Gastrocnemius medialis (tissue), 4 donors: ENCODE measurements at regions of chr2 and their contacts with region 1.

Region 1: GRCh38 chr2:44167940-44168680 is 565 bp upstream of the PPM1B start:
- DNase-seq: peak; percentile 100
- ATAC-seq: peak; percentile 72 to 76
- H3K4me3 ChIP-seq: peak overlapping the region; percentile 54 to 65 (median 60)
- H3K27ac ChIP-seq: peak overlapping the region; percentile 89 to 96 (median 92)
- H3K4me1 ChIP-seq: peaks cover 19 to 27% of the 10 kb centered on the region in 2 donors
- H3K27me3 ChIP-seq: no peaks in the 10 kb centered on the region
- CTCF ChIP-seq: no peak
- POLR2A ChIP-seq: peak; percentile 76 to 81

Region 2: GRCh38 chr2:43995733-43996533 is 172.2 kb before region 1 on chr2 and contains the start of gene LRPPRC:
- in situ Hi-C with region 1: no loop called
- intact Hi-C with region 1: loop called (anchors 5 kb)
- DNase-seq: peak; percentile 95
- ATAC-seq: peak; percentile 99
- H3K4me3 ChIP-seq: peak within 1 kb of the TSS; percentile 78 to 99 (median 96)
- H3K27ac ChIP-seq: peak within 1 kb of the TSS; percentile 74 to 97 (median 92)
- H3K4me1 ChIP-seq: peaks cover 22 to 35% of the 10 kb centered on the region in 2 donors
- H3K27me3 ChIP-seq: no peaks in the 10 kb centered on the region
- CTCF ChIP-seq: peak in 1 of 5 experiments; percentile 22
- POLR2A ChIP-seq: peak; percentile 77 to 94
- total RNA-seq, gene LRPPRC: 75.9 to 95.3 (median 81.5) TPM

Region 3: DNA sequence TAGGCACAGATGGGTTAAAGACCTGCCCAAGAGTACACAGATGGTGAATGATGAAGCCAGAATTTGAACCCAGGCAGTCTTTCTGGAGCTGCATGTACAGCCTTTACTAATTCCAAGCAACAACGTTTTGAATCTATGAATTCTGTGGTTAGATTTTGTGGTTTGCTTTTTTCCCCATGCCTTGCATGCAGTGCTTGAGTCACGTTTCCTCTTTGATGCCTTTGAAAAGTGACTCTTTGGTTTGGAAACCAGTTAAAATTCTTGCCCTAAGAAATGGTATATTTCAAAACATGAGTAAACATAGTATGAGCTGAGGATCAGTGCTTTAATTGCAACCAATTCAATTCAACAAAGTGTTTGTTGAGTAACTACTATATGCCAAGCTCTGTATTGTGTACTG is 47.7 kb before region 1 on chr2:
- in situ Hi-C with region 1: no loop called
- intact Hi-C with region 1: loop called (anchors 1 kb)
- DNase-seq: no peak
- ATAC-seq: no peak
- H3K4me3 ChIP-seq: no peak overlapping the region
- H3K27ac ChIP-seq: no peak overlapping the region
- H3K4me1 ChIP-seq: peaks cover 0 to 2% of the 10 kb centered on the region in 2 donors
- H3K27me3 ChIP-seq: no peaks in the 10 kb centered on the region
- CTCF ChIP-seq: no peak
- POLR2A ChIP-seq: no peak

Region 4: GRCh38 chr2:44130441-44130840 is 37.7 kb before region 1 on chr2:
- in situ Hi-C with region 1: no loop called
- intact Hi-C with region 1: loop called (anchors 1 kb)
- DNase-seq: no peak
- ATAC-seq: peak; percentile 75 to 76
- H3K4me3 ChIP-seq: peak overlapping the region in 1 of 4 donors; percentile 14
- H3K27ac ChIP-seq: peak overlapping the region; percentile 80 to 89 (median 86)
- H3K4me1 ChIP-seq: peaks cover 29 to 38% of the 10 kb centered on the region in 2 donors
- H3K27me3 ChIP-seq: no peaks in the 10 kb centered on the region
- CTCF ChIP-seq: no peak
- POLR2A ChIP-seq: peak in 1 of 2 donors; percentile 17

Region 5: DNA sequence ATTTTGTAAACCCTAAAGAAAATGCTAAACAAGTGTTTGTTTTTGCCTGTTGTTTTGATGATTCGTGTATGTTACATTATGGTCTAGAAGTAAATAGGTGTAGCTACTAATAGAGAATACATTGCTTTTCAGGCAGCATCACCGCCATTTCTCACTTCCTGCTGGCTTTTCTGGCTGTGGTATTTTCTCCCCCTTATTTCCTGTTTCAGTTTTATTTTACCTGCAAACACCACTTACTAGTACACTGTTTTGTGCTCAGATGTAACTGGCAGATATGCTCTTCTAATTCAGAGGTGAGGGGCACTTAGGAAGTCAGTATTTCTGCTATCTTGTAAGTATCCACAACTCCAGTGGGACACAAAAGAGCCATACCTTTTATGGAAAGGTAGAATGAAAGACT is 69.1 kb after region 1 on chr2:
- in situ Hi-C with region 1: no loop called
- intact Hi-C with region 1: loop called (anchors 5 kb)
- DNase-seq: no peak
- ATAC-seq: no peak
- H3K4me3 ChIP-seq: no peak overlapping the region
- H3K27ac ChIP-seq: no peak overlapping the region
- H3K4me1 ChIP-seq: peaks cover 0 to 2% of the 10 kb centered on the region in 2 donors
- H3K27me3 ChIP-seq: no peaks in the 10 kb centered on the region
- CTCF ChIP-seq: no peak
- POLR2A ChIP-seq: no peak

Region 6: DNA sequence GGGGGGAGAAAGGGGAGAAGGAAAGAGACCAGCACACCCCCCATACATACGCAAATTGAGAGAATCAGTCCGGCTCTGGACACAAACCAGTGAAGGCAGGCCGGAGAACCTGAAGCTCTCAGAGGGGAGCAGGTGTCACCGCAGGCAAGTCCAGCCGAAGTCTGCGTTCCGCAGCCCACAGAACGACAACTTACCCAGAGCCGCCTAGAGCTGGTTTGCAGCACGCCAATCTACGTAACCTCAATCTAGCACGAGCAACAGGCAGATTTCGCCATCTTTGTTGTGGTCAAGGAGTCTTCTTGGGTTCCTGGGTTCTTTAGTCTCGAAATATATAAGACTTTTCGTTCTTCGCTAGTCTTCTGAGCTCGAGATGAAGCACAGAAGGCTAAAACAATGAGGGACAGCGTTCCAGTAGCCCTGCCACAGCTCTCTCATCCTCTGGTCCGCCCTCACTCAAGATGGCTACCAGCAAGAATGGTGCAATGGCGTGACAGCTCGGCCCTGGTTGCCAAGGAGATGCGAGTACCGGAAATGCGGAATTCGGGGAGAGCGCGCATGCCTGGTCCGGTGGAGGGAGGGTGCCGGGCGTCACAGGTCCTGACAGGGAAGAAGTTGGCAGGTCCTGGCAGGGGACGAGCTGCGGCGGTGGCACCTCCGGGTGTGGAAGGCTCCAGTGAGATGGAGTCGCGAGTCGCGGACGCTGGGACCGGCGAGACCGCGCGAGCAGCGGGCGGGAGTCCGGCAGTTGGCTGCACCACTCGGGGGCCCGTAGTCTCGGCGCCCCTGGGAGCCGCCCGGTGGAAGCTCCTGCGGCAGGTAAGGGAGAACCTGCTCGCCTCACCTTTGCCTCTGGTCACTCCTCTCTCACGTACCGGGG is 193.5 kb after region 1 on chr2 and contains the starts of genes CAMKMT and PREPL:
- in situ Hi-C with region 1: no loop called
- intact Hi-C with region 1: loop called (anchors 5 kb)
- DNase-seq: peak; percentile 98 to 99
- ATAC-seq: peak; percentile 94 to 95
- H3K4me3 ChIP-seq: peak within 1 kb of the TSS; percentile 64 to 96 (median 86)
- H3K27ac ChIP-seq: peak within 1 kb of the TSS; percentile 93 to 96 (median 94)
- H3K4me1 ChIP-seq: peaks cover 44 to 47% of the 10 kb centered on the region in 2 donors
- H3K27me3 ChIP-seq: no peaks in the 10 kb centered on the region
- CTCF ChIP-seq: no peak
- POLR2A ChIP-seq: peak; percentile 73 to 87
- total RNA-seq, gene CAMKMT: 2.6 to 9.5 (median 5.2) TPM
- total RNA-seq, gene PREPL: 27.3 to 60.0 (median 52.3) TPM